ENCODE measurements at regions of chr9 and their contacts with region 1.

Region 1: GRCh38 chr9:111896353-111896958 is at the start of gene UGCG:
- DNase-seq: peak; percentile 91 to 96 (median 96)
- ATAC-seq: peak; percentile 99
- H3K4me3 ChIP-seq: peak within 1 kb of the TSS; percentile 74
- H3K27ac ChIP-seq: peak within 1 kb of the TSS; percentile 84
- H3K4me1 ChIP-seq: peaks cover 5% of the 10 kb centered on the region
- H3K27me3 ChIP-seq: no peaks in the 10 kb centered on the region
- total RNA-seq, gene UGCG: 7.1 to 13.1 (median 10.1) TPM

Region 2: DNA sequence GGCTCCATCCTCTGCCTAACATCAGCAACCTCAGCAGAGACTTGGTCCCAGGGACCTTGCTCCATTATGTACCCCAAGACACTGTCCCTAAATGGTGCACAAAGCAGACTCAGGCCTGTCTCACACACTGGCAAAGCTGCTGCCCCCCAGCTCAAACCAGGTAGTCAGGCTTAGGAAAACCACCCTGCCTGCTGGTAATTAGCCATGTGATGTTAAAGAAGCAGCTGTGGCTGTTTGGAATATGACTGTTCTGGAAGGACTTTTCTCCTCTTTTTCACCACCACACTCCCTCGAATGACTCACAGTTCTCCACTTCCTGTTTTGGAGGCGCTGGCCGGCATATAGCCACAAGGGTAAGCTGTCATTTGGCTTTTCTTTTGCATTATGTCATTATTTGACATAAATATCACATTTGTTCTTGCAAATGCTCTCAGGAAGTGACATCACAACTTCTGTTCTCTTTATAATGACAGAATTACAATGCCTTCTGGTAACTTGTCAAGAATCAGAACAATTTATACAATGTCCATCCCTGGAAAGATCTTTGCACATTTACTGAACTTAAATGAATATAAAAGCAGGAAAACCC is 164.8 kb after region 1 on chr9:
- intact Hi-C with region 1: loop called in 1 of 4 experiments (anchors 10 kb)
- DNase-seq: peak; percentile 59 to 80 (median 70)
- ATAC-seq: peak; percentile 84 to 88
- H3K4me3 ChIP-seq: no peak overlapping the region
- H3K27ac ChIP-seq: peak overlapping the region; percentile 55
- H3K4me1 ChIP-seq: peaks cover 11% of the 10 kb centered on the region
- H3K27me3 ChIP-seq: no peaks in the 10 kb centered on the region

Region 3: DNA sequence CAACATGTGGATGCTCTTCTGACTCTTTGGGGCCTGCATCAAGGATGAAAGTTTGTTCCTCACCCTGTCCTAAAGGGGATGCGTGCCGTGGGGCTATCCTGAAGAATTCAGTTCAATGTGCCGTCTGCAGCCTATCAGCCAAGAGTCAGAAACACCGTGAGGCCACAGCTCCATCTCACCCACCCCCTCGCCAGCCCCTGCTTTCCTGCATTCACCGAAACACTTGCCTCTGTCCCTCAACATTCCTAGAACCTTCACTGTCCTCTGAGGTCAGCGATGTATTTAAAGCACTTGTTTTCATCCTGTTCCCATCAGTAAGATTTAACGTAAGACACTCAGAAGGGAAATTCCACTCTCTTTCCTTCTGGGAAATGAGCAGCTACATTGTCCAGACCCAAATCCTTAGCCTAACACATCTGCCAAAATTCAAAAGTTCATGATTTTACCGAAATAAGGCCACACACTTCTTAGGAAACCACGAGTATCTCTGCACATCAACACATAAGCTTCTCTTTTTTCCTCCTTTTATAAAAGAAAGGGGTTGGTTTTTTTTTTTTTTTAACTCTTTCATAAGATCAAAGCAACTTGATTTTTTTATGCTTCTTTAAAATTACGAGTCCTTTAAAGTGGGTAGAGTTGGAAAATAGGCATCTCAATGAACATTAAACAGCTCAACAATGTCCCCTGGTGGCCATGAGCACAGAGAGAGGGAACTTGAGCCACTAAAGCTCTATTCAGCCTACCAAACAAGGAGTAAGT is 178.0 kb after region 1 on chr9:
- intact Hi-C with region 1: loop called in 2 of 4 experiments (anchors 10 kb)
- DNase-seq: peak; percentile 55 to 75 (median 66)
- ATAC-seq: peak; percentile 85 to 86
- H3K4me3 ChIP-seq: peak overlapping the region; percentile 17
- H3K27ac ChIP-seq: peak overlapping the region; percentile 43
- H3K4me1 ChIP-seq: peaks cover 5% of the 10 kb centered on the region
- H3K27me3 ChIP-seq: no peaks in the 10 kb centered on the region

Measured in right cardiac atrium (tissue), 5 donors.